ENCODE measurements at regions of chr16 and their contacts with region 1.

Region 1: DNA sequence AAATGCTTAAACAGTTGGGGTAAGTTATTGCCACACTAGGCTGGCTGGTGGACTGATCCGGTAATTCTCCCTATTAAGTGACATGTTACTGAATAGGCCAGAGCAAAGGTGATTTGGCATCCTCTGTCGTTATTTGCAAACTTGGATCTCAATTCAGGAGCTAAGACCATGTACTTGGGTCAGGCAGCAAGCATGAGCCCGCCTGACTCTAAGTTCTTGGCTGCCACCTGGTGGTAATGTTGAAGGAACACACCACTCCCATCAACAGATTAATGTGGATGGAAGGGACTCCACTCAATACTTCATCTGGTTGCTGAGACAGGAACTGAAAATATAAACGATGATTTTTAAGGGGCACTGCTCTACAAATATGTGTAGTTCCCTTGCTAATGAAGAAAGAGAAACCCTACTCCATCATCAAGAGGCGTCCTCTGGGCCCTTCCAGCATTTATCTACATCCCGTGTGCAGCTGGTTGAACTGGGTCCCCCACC is 70.8 kb downstream of the EMP2 start:
- DNase-seq: peak in 4 of 5 donors; percentile 69 to 94 (median 82)
- H3K4me3 ChIP-seq: no peak overlapping the region
- H3K27ac ChIP-seq: no peak overlapping the region
- H3K4me1 ChIP-seq: peaks cover 0 to 2% (median 0%) of the 10 kb centered on the region in 3 donors
- H3K27me3 ChIP-seq: no peaks in the 10 kb centered on the region
- CTCF ChIP-seq: peak; percentile 86

Region 2: DNA sequence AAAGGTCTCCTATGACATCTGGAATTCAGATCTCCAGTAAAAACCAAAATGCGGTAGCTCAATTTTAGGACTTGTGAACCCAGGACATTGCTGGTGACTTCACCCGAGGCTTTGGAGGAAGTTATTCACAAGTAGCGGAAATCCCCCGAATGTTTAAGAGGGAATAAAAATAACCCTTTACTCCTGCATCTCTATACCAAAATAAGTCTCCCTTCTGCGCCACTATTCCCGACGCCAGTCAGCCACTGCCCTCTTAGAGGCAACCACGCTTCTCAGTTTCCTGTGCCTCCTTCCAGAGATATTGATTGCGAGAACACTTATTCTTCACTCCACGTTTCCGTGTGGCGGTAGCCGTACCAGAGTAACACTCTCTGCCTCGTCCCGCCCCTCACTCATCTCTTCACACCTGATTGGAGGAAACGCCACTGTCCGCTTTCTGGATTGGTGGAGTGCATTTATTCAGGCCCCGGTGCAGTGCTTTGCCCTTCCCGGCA is 43.5 kb after region 1 on chr16:
- intact Hi-C with region 1: no loop called
- DNase-seq: no peak
- H3K4me3 ChIP-seq: no peak overlapping the region
- H3K27ac ChIP-seq: no peak overlapping the region
- H3K4me1 ChIP-seq: no peaks in the 10 kb centered on the region
- H3K27me3 ChIP-seq: no peaks in the 10 kb centered on the region
- CTCF ChIP-seq: no peak

Region 3: DNA sequence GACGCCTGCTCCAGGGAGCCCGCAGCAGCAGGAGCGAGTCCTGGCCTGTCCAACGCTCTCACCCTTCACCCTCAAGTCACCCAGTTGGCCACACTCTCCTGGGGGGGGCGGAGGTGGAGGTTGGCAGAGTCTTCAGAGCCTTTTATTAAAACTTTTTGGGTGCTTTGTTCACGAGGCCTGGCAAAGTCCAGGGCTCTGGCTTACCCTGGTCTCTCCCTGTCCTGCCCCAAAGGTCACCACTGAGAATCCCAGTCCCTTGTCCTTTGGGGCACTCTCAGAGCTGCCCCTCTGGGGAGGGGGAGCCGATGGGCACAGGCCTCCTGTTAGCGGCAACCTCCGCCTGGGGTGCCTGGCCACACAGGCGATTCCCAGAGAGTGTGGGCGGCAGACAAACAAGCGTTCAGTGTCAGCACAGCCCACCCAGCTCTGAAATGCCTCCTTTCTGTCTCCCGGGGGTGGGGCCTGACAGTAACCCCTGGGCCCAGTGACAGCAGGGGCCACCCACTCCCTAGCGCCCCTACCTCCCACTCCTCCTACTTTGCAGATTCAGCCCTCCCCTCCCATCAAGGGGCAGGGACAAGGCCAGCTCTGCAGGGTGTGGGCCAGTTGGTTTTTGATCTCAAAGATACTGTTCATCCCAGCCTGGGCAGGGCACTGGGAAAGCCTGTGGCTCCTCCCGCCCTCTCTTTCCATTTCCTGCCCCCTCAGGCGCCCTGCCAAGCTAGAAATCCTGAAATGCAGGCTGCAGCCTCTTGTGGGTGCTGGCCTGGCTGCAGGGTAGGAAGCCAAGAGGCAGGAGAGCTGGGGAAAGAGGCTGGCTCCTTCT is 107.4 kb after region 1 on chr16:
- intact Hi-C with region 1: no loop called
- DNase-seq: peak; percentile 36 to 79 (median 70)
- H3K4me3 ChIP-seq: no peak overlapping the region
- H3K27ac ChIP-seq: no peak overlapping the region
- H3K4me1 ChIP-seq: no peaks in the 10 kb centered on the region
- H3K27me3 ChIP-seq: no peaks in the 10 kb centered on the region
- CTCF ChIP-seq: no peak

Region 4: DNA sequence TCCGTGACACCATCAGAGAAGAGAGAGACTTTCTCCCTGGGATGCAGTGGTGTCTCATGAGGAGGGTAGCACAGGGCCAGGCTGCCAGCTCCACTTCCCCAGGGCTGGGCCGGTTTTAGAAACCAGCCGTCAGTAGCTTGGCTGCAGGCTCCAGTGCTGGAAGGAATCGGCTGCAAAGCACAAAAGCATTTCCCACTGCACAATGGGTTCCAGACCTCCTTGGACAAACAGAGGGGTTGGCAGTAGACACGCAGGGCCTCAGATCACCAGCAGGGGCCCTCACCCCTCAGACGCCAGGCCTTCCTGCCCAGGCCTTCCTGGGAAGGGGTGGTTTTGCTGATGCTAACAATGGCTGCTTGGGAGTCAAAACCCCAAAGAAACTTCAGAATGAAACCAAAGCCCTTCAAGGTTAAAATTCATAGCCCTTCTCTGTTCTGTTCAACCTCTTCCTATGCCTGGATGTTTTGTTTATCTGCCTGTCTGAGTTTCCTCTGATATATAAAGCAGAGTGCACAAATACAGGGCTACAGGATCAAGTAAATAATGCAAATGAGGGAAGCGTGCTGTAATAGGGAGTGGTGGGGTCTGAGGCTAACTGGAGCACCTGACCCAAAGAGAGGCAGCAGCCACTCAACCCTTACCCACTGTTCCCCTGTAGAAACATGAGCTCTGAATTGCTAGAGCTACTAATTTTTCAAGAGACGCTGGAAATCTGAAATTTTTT is 158.9 kb after region 1 on chr16:
- intact Hi-C with region 1: no loop called
- DNase-seq: no peak
- H3K4me3 ChIP-seq: no peak overlapping the region
- H3K27ac ChIP-seq: no peak overlapping the region
- H3K4me1 ChIP-seq: no peaks in the 10 kb centered on the region
- H3K27me3 ChIP-seq: no peaks in the 10 kb centered on the region
- CTCF ChIP-seq: no peak

Region 5: GRCh38 chr16:10737068-10737625 is 227.6 kb after region 1 on chr16:
- intact Hi-C with region 1: loop called (anchors 5 kb)
- DNase-seq: peak in 4 of 5 donors; percentile 75 to 88 (median 82)
- H3K4me3 ChIP-seq: peak overlapping the region in 1 of 3 donors; percentile 61
- H3K27ac ChIP-seq: no peak overlapping the region
- H3K4me1 ChIP-seq: peaks cover 0 to 2% (median 0%) of the 10 kb centered on the region in 3 donors
- H3K27me3 ChIP-seq: no peaks in the 10 kb centered on the region
- CTCF ChIP-seq: peak; percentile 84